Activated CD8-positive, alpha-beta T cell treated with anti-CD3 and anti-CD28 coated beads for 36 hours (primary cell): ENCODE measurements at regions of chr3 and their contacts with region 1.

Region 1: DNA sequence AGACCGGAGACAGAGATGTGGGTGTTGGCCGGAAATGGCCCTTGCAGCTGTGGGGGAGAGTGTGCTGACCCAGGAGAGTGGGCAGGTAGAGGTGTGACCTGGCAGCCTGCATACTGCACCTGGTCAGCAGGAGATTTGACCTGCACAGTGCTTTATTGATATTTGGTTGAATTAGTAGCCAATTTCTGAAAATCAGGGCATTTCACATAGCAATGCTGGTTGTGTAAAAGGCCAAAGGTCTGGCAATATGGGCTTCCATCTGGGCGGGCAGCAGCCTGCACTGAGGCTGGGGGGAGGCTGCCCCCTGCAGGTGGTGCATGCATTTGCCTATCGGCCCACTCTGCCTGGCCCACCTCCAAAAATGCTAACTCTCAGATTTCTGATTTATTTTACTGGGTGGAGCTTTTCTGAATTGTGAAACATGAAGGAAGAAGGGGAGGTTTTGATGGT is 9.4 kb upstream of the MGLL start:
- DNase-seq: peak; percentile 54
- ATAC-seq: peak; percentile 65
- H3K4me3 Mint-ChIP-seq: no peak overlapping the region
- H3K27ac Mint-ChIP-seq: no peak overlapping the region
- H3K4me1 Mint-ChIP-seq: peaks cover 4% of the 10 kb centered on the region
- H3K27me3 Mint-ChIP-seq: peaks cover 9% of the 10 kb centered on the region
- CTCF ChIP-seq: peak; percentile 65

Region 2: GRCh38 chr3:127647166-127647844 is 184.4 kb before region 1 on chr3:
- CTCF ChIA-PET with region 1: interaction called, 10 read pairs
- POLR2A ChIA-PET with region 1: no interaction called
- intact Hi-C with region 1: no loop called
- DNase-seq: no peak
- ATAC-seq: no peak
- H3K4me3 Mint-ChIP-seq: no peak overlapping the region
- H3K27ac Mint-ChIP-seq: no peak overlapping the region
- H3K4me1 Mint-ChIP-seq: no peaks in the 10 kb centered on the region
- H3K27me3 Mint-ChIP-seq: no peaks in the 10 kb centered on the region
- CTCF ChIP-seq: no peak

Region 3: GRCh38 chr3:128572644-128573105 is 740.9 kb after region 1 on chr3:
- CTCF ChIA-PET with region 1: no interaction called
- POLR2A ChIA-PET with region 1: no interaction called
- intact Hi-C with region 1: no loop called
- DNase-seq: peak; percentile 74
- ATAC-seq: peak; percentile 76
- H3K4me3 Mint-ChIP-seq: no peak overlapping the region
- H3K27ac Mint-ChIP-seq: no peak overlapping the region
- H3K4me1 Mint-ChIP-seq: peaks cover 20% of the 10 kb centered on the region
- H3K27me3 Mint-ChIP-seq: peaks cover 9% of the 10 kb centered on the region
- CTCF ChIP-seq: no peak